GM10248 (cell line): ENCODE measurements at regions of chr4 and their contacts with region 1.

Region 1: DNA sequence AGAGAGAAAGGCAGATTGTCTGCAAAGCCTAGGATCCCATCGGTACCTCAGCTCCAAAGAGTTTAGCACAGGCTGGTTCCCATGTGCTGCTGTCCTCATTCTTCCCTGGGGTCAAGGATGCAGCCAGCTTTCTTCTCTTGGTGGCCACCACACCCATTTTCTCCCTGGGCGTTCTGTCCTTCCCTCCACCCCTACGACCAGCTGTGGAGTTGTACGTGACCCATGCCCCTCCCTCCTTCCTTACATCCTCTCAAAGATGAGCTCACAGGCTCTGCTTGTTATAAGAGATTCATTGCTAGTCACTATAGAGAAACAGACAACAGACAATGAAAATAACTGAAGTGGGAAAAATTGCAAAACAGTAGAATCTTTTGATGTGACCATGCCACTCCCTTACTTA is 74.0 kb upstream of the KLF3 start:
- DNase-seq: no peak
- CTCF ChIP-seq: no peak

Region 2: GRCh38 chr4:38574559-38575333 is 15.3 kb before region 1 on chr4:
- CTCF ChIA-PET with region 1: interaction called, 12 read pairs
- POLR2A ChIA-PET with region 1: no interaction called
- DNase-seq: no peak
- CTCF ChIP-seq: no peak

Region 3: GRCh38 chr4:38983787-38984598 is 393.9 kb after region 1 on chr4:
- CTCF ChIA-PET with region 1: no interaction called
- POLR2A ChIA-PET with region 1: no interaction called
- DNase-seq: no peak
- CTCF ChIP-seq: no peak